ENCODE measurements at regions of chr18 and their contacts with region 1.

Region 1: GRCh38 chr18:41624460-41624859 is 330.6 kb upstream of the PIK3C3 start:
- DNase-seq: no peak
- H3K4me3 ChIP-seq: no peak overlapping the region
- H3K27ac ChIP-seq: no peak overlapping the region
- H3K4me1 ChIP-seq: no peaks in the 10 kb centered on the region
- H3K27me3 ChIP-seq: no peaks in the 10 kb centered on the region
- CTCF ChIP-seq: no peak

Region 2: GRCh38 chr18:41466436-41467160 is 157.9 kb before region 1 on chr18:
- CTCF ChIA-PET with region 1: no interaction called
- POLR2A ChIA-PET with region 1: no interaction called
- intact Hi-C with region 1: no loop called
- DNase-seq: no peak
- H3K4me3 ChIP-seq: no peak overlapping the region
- H3K27ac ChIP-seq: no peak overlapping the region
- H3K4me1 ChIP-seq: no peaks in the 10 kb centered on the region
- H3K27me3 ChIP-seq: no peaks in the 10 kb centered on the region
- CTCF ChIP-seq: no peak

Region 3: DNA sequence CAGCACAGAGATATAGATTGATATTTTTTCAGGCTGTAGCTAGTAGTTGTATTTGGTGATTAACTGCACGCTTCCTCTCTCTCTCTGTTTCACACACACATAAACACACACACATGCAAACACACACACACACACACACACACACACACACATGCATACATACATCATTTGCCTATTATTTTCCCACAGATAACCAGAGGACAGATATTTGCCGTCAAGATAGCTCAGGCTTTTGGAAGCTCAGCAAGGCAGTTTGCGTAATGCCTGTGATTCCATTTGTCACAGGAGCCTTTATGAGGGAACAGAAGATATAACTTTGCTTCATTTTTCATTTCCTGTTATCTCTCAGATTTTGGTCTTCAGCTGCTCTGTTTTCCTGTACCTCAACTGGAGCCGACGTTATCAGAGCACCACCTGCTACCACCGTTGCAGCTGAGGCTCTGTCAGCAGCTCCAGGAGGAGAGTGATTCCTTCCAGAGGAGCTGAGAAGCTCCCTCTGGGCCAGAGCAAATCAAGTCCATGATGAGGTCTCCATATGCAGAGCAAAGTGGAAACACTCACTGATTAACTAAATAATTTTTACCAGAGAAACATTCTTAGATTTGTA is 11.4 kb before region 1 on chr18:
- CTCF ChIA-PET with region 1: interaction called, 17 read pairs
- POLR2A ChIA-PET with region 1: no interaction called
- intact Hi-C with region 1: no loop called
- DNase-seq: no peak
- H3K4me3 ChIP-seq: no peak overlapping the region
- H3K27ac ChIP-seq: no peak overlapping the region
- H3K4me1 ChIP-seq: no peaks in the 10 kb centered on the region
- H3K27me3 ChIP-seq: no peaks in the 10 kb centered on the region
- CTCF ChIP-seq: no peak

Region 4: DNA sequence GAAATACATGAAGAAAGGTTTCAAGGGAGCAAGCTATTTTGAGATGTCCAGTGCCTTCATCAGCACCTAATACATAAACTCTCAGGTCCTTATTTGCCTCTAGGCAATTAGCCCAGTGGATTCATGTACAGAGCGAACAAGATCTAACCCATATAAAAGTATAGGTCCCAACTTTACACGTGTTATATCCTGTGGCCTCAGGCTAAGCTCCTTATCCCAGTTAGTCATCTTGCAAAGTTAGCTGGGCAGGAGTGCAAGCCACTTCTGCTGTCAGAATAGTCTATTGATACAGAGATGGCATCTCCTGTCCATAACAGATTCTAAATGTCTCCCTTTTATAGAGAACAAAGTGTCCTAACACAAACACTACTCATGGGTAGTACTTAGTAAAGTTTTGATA is 126.7 kb after region 1 on chr18:
- CTCF ChIA-PET with region 1: no interaction called
- POLR2A ChIA-PET with region 1: interaction called, 11 read pairs
- intact Hi-C with region 1: no loop called
- DNase-seq: no peak
- H3K4me3 ChIP-seq: no peak overlapping the region
- H3K27ac ChIP-seq: no peak overlapping the region
- H3K4me1 ChIP-seq: no peaks in the 10 kb centered on the region
- H3K27me3 ChIP-seq: peaks cover 12% of the 10 kb centered on the region
- CTCF ChIP-seq: no peak